Left ventricle myocardium superior (tissue), 1 donor: ENCODE measurements at regions of chr11 and their contacts with region 1.

Region 1: GRCh38 chr11:75204685-75205563 is 35.6 kb upstream of the TPBGL start:
- DNase-seq: peak; percentile 95
- ATAC-seq: peak; percentile 94

Region 2: DNA sequence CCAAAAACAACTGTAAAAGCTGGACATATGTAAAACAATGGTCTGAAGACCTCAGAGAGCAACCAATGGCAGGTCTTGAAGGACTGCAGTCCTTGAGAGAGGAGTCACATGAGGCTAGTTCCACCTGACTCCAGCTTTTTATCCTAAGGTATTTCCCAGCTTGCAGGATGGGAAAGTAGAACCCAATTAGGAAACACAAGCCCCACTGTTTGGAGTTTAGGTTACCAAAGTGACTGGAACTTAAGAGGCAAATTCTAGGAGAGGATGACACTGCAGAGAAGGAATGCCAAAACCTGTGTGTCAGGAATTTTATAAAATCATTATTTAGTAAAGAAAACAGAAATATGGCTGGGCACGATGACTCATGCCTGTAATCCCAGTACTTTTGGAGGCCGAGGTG is 126.7 kb before region 1 on chr11:
- intact Hi-C with region 1: no loop called
- DNase-seq: no peak
- ATAC-seq: no peak

Region 3: DNA sequence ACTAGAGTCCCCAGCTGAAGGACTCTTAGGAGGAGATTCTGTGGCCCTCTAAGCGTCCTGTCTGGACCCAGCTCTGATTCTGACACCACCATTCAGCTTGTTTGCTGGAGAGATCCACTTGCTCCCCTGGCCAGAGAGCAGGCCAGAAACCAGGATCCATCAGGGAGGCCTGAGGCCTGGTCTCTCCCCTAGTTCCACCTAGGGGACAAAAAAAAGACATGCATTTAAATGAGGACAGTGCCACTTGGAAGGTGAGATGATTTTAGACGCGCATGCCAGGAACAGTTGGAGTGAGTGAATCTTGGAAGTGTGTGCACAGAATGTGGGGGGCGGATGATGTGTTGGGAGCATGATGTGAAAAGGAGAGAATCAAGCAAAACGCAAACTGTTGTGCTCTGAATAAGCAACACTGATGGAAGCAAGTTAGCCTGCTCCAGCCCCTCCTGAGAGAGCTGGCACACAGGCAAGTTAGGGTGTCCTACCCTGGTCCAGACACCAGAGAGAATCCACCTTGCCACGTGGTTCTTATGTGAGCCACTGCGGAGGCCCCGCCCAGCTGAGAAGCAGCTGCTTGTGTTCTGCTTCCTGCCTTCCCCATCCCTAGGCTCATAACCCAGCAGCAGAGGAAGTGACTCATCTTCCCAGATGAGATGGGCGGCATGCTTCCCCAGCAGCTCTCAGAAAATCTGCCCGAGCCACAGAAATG is 62.1 kb before region 1 on chr11:
- intact Hi-C with region 1: loop called (anchors 5 kb)
- DNase-seq: peak; percentile 86
- ATAC-seq: peak; percentile 87

Region 4: DNA sequence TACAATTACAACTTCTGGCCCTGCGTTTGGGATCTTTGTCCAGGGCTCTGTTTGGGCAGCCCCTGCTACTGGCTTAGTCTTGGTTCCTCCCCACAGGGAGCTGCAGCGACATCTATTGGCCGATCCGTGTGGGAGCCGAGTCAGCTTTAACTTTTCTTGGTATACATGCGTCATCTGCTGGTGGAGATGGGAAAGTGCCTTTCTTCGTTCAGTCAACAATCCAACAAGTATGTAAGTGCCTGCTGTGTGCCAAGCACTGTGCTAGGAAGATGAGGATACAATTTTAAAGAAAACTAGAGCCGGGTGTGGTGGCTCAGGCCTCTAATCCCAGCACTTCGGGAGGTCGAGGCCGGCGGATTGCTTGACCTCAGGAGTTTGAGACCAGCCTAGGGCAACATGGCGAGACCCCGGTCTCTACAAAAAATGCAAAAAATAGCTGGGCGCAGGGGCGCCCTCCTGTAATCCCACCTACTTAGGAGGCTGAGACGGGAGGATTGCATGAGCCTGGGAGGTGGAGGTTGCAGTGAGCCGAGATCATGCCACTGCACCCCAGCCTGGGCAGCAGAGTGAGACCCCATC is 43.9 kb after region 1 on chr11:
- intact Hi-C with region 1: no loop called
- DNase-seq: peak; percentile 90
- ATAC-seq: peak; percentile 96

Region 5: GRCh38 chr11:75280770-75281468 is 76.0 kb after region 1 on chr11:
- intact Hi-C with region 1: no loop called
- DNase-seq: peak; percentile 25
- ATAC-seq: peak; percentile 12